IMR-90 (cell line): ENCODE measurements at regions of chr6 and their contacts with region 1.

Region 1: GRCh38 chr6:47242483-47243386 is 67.0 kb downstream of the TNFRSF21 start:
- DNase-seq: peak; percentile 90
- ATAC-seq: peak; percentile 96
- H3K4me3 ChIP-seq: no peak overlapping the region
- H3K27ac ChIP-seq: 0 out of 2 replicates have a peak overlapping the region, but pooled peaks have one; percentile 4
- H3K4me1 ChIP-seq: peaks cover 3% of the 10 kb centered on the region; the same call in 1 of the 2 replicates
- H3K27me3 ChIP-seq: no peaks in the 10 kb centered on the region
- CTCF ChIP-seq: no peak
- POLR2A ChIP-seq: no peak
- RAD21 ChIP-seq: no peak

Region 2: DNA sequence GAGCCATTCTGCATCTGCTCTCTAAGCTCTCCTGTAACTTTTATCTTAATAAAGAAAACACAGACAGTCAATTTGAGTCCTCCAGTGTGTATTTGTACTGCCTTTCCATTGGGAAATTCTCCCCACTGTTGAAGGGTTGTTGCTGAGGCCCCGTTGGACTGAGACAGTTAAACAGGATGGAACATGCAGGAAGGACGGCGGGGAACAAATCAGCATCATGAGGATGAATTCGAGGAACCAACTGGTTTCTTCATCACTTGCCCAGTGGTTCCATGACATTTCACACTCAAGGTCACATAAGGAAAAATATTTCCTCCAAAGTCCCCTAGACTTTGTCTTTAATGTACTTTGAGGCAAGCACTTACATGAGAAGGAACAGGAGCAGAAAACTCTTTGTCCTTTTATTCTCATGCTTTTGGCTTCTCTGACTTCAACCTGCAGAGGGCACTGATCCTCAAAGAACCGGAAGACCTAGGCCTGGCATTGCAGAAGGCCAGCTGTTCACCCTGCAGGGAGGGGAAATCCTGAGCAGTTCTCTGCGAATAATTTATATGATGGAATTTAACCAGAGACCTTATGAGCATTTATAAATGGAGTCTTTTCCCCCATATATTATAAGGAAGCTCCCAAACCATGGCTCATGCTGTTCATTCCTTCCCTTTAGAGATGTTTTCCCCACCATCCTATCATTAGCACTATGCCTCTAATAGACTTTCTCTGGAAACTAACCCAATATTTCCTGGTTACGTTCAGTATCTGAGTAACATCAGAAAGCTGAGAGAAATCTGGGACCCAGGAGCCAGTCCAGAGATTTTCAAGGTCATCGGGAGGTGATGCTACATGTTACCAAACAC is 145.4 kb before region 1 on chr6:
- CTCF ChIA-PET with region 1: no interaction called
- POLR2A ChIA-PET with region 1: no interaction called
- dilution Hi-C with region 1: no loop called
- in situ Hi-C with region 1: no loop called
- intact Hi-C with region 1: loop called (anchors 5 kb)
- DNase-seq: peak; percentile 85
- ATAC-seq: peak; percentile 90
- H3K4me3 ChIP-seq: no peak overlapping the region
- H3K27ac ChIP-seq: no peak overlapping the region
- H3K4me1 ChIP-seq: no peaks in the 10 kb centered on the region
- H3K27me3 ChIP-seq: 0 out of 2 replicates have a peak, but pooled peaks cover 2% of the 10 kb centered on the region
- CTCF ChIP-seq: peak; percentile 95
- POLR2A ChIP-seq: 0 out of 2 replicates have a peak, but pooled peaks have one; percentile 23
- RAD21 ChIP-seq: peak; percentile 98

Region 3: GRCh38 chr6:47153032-47153755 is 89.5 kb before region 1 on chr6:
- CTCF ChIA-PET with region 1: interaction called, 7 read pairs
- POLR2A ChIA-PET with region 1: no interaction called
- dilution Hi-C with region 1: no loop called
- in situ Hi-C with region 1: no loop called
- intact Hi-C with region 1: loop called (anchors 5 kb)
- DNase-seq: peak; percentile 33
- ATAC-seq: peak; percentile 57; the same call in 1 of the 2 replicates
- H3K4me3 ChIP-seq: no peak overlapping the region
- H3K27ac ChIP-seq: peak overlapping the region; percentile 19
- H3K4me1 ChIP-seq: peaks cover 12% of the 10 kb centered on the region
- H3K27me3 ChIP-seq: no peaks in the 10 kb centered on the region
- CTCF ChIP-seq: no peak
- POLR2A ChIP-seq: no peak
- RAD21 ChIP-seq: no peak

Region 4: DNA sequence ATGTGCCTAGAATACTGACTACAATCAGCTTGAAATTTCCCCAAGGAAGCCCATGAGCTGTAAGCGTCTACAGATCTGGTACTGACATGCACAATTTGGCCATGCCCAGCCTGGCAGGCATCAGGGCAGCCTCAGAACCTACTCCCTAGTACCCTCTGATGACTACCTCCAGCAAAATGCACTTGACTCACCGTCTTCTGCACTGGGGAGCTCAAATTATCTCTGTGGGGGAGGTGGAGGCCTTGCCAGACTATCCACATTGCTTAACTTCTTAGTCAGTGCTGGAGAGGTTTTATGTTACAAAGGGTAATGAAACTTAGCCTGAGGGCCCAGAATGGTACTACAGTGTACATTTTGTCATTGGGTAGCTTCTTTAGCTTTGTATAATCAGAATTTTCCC is 74.6 kb before region 1 on chr6:
- CTCF ChIA-PET with region 1: no interaction called
- POLR2A ChIA-PET with region 1: no interaction called
- dilution Hi-C with region 1: no loop called
- in situ Hi-C with region 1: no loop called
- intact Hi-C with region 1: loop called (anchors 5 kb)
- DNase-seq: peak; percentile 98
- ATAC-seq: peak; percentile 97
- H3K4me3 ChIP-seq: no peak overlapping the region
- H3K27ac ChIP-seq: peak overlapping the region; percentile 92
- H3K4me1 ChIP-seq: peaks cover 17% of the 10 kb centered on the region
- H3K27me3 ChIP-seq: no peaks in the 10 kb centered on the region
- CTCF ChIP-seq: no peak
- POLR2A ChIP-seq: no peak
- RAD21 ChIP-seq: no peak; the same call in 1 of the 2 replicates